ENCODE measurements at regions of chr17 and their contacts with region 1.

Region 1: GRCh38 chr17:75779231-75779986 is 5.2 kb upstream of the UNK start:
- DNase-seq: peak; percentile 94 to 98
- H3K4me3 ChIP-seq: peak overlapping the region; percentile 75 to 93 (median 86)
- H3K27ac ChIP-seq: peak overlapping the region; percentile 92
- H3K4me1 ChIP-seq: peaks cover 0 to 10% (median 7%) of the 10 kb centered on the region in 4 experiments; a peak in 6 of 7 replicates
- H3K27me3 ChIP-seq: no peaks in the 10 kb centered on the region
- CTCF ChIP-seq: no peak
- EP300 ChIP-seq: no peak
- POLR2A ChIP-seq: peak; percentile 100
- RAD21 ChIP-seq: no peak

Region 2: GRCh38 chr17:75720725-75721462 is 58.5 kb before region 1 on chr17 and contains the start of gene ITGB4:
- CTCF ChIA-PET with region 1: no interaction called
- POLR2A ChIA-PET with region 1: interaction called, 45 read pairs
- DNase-seq: peak; percentile 50 to 84
- H3K4me3 ChIP-seq: peak within 1 kb of the TSS; percentile 49 to 74 (median 50)
- H3K27ac ChIP-seq: no peak within 1 kb of the TSS
- H3K4me1 ChIP-seq: peaks cover 0 to 8% (median 4%) of the 10 kb centered on the region in 4 experiments; a peak in 3 of 7 replicates
- H3K27me3 ChIP-seq: peaks cover 4 to 30% (median 17%) of the 10 kb centered on the region in 4 experiments; a peak in 6 of 7 replicates
- CTCF ChIP-seq: peak in 2 of 3 experiments; percentile 1 to 33; a peak in 2 of 4 replicates
- EP300 ChIP-seq: peak in 1 of 2 experiments; percentile 26; a peak in 1 of 3 replicates
- POLR2A ChIP-seq: peak in 1 of 2 experiments; percentile 43; a peak in 1 of 3 replicates
- RAD21 ChIP-seq: no peak
- total RNA-seq, gene ITGB4: 5.4 and 5.6 TPM in 2 replicates

Region 3: DNA sequence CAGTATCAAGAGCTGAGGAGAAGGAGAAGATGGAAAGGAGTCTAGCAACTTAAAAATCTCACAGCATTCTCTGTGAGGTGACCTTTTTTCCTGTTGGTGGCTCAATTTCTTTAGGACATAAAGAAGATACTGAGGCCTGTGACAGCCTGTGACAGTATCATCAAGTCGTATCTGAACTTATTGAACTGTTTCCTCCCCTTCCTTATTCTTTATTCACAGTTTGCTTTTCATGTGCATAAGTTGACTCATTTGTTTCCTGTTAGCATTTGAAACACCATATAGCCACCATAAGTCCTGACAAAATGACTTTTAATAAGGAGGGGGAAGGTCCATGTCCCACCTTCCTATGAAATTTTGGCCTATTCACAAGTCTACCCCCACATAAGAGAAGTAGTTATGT is 14.1 kb after region 1 on chr17:
- CTCF ChIA-PET with region 1: interaction called, 10 read pairs
- POLR2A ChIA-PET with region 1: interaction called, 90 read pairs
- DNase-seq: no peak
- H3K4me3 ChIP-seq: no peak overlapping the region
- H3K27ac ChIP-seq: no peak overlapping the region
- H3K4me1 ChIP-seq: no peaks in the 10 kb centered on the region
- H3K27me3 ChIP-seq: no peaks in the 10 kb centered on the region
- CTCF ChIP-seq: no peak
- EP300 ChIP-seq: no peak
- POLR2A ChIP-seq: no peak
- RAD21 ChIP-seq: no peak

Region 4: GRCh38 chr17:75808905-75809715 is 29.7 kb after region 1 on chr17:
- CTCF ChIA-PET with region 1: interaction called, 5 read pairs
- POLR2A ChIA-PET with region 1: interaction called, 34 read pairs
- DNase-seq: no peak
- H3K4me3 ChIP-seq: no peak overlapping the region
- H3K27ac ChIP-seq: no peak overlapping the region
- H3K4me1 ChIP-seq: no peaks in the 10 kb centered on the region
- H3K27me3 ChIP-seq: no peaks in the 10 kb centered on the region
- CTCF ChIP-seq: no peak
- EP300 ChIP-seq: no peak
- POLR2A ChIP-seq: no peak
- RAD21 ChIP-seq: no peak

Region 5: GRCh38 chr17:75845049-75845860 is 65.8 kb after region 1 on chr17:
- CTCF ChIA-PET with region 1: interaction called, 7 read pairs
- POLR2A ChIA-PET with region 1: interaction called, 15 read pairs
- DNase-seq: peak; percentile 57 to 87
- H3K4me3 ChIP-seq: no peak overlapping the region
- H3K27ac ChIP-seq: no peak overlapping the region
- H3K4me1 ChIP-seq: peaks cover 0 to 8% (median 6%) of the 10 kb centered on the region in 4 experiments; a peak in 4 of 7 replicates
- H3K27me3 ChIP-seq: no peaks in the 10 kb centered on the region
- CTCF ChIP-seq: peak; percentile 63 to 93 (median 82)
- EP300 ChIP-seq: no peak
- POLR2A ChIP-seq: no peak
- RAD21 ChIP-seq: peak in 1 of 2 experiments; percentile 49; a peak in 2 of 4 replicates

Region 6: DNA sequence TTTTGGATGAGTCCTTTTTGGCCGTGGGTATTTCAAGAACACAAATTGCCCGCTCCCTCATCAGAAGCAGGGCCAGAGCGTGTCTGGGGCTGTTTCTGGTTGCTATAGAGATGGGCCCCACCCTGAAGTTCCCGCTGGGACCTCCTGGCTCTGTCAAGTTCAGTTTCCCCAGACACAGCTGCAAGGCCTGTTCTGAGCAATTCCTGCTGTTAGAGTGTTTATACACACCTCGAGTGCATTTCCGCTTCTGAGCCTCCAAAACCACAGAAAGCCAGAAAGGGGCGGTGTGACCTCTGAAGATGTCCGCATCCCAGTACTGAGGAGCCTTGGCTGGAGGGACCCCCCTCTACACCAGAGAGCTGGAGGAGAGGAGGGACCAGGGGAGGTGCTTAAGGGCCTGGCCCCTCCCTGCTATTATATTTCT is 85.1 kb after region 1 on chr17:
- CTCF ChIA-PET with region 1: interaction called, 7 read pairs
- POLR2A ChIA-PET with region 1: interaction called, 12 read pairs
- DNase-seq: no peak
- H3K4me3 ChIP-seq: no peak overlapping the region
- H3K27ac ChIP-seq: no peak overlapping the region
- H3K4me1 ChIP-seq: peaks cover 0 to 3% (median 1%) of the 10 kb centered on the region in 4 experiments; a peak in 5 of 7 replicates
- H3K27me3 ChIP-seq: no peaks in the 10 kb centered on the region
- CTCF ChIP-seq: no peak
- EP300 ChIP-seq: no peak
- POLR2A ChIP-seq: no peak
- RAD21 ChIP-seq: no peak

Measured in H1 (cell line).